Activated CD4-positive, alpha-beta memory T cell treated with anti-CD3 and anti-CD28 coated beads for 36 hours (primary cell): ENCODE measurements at regions of chr6 and their contacts with region 1.

Region 1: DNA sequence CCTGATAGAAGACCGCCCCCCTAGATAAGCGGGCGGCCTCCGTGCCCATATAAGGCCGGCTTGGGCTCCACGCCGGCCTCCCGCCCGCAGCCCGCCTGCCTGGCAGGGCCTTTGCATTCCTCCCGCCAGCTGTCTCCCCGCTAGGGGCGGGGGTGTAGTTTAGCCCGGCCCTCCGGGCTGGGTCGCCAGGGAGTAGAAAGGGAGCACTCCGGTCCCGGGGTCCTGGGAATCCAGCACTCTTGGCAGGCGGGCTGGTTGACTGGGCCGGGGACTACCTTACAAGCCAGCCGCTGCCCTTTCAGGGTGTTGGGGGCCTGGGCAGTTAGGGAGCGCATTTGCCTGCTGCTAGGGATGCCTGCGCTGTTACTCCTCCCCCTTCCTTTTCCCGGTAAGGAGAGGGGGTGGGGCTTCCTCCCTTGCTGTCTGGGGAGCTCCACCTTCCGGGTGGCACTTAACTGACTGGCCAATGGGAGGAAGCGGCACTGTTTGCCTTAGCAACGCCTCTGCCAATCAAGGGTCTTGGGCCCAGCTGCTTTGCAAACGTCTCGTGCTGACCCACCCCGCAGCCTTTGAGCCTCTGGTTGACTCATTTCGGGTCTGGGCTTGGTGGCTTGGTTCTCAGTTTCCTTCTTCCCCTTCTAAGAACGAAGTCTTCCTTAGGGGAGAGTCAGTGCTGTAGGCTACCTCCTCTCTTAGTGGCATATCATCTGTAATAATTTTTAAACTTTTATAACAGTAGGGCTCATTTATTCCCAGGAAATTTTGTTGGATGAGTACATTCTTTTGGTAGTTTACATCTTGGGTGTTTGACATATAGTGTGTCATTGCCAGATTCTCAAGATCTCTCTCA is 3.4 kb downstream of the SRF start:
- DNase-seq: peak; percentile 99
- H3K4me3 Mint-ChIP-seq: peak overlapping the region; percentile 99
- H3K27ac Mint-ChIP-seq: peak overlapping the region; percentile 89
- H3K4me1 Mint-ChIP-seq: peaks cover 43% of the 10 kb centered on the region
- H3K27me3 Mint-ChIP-seq: no peaks in the 10 kb centered on the region

Region 2: DNA sequence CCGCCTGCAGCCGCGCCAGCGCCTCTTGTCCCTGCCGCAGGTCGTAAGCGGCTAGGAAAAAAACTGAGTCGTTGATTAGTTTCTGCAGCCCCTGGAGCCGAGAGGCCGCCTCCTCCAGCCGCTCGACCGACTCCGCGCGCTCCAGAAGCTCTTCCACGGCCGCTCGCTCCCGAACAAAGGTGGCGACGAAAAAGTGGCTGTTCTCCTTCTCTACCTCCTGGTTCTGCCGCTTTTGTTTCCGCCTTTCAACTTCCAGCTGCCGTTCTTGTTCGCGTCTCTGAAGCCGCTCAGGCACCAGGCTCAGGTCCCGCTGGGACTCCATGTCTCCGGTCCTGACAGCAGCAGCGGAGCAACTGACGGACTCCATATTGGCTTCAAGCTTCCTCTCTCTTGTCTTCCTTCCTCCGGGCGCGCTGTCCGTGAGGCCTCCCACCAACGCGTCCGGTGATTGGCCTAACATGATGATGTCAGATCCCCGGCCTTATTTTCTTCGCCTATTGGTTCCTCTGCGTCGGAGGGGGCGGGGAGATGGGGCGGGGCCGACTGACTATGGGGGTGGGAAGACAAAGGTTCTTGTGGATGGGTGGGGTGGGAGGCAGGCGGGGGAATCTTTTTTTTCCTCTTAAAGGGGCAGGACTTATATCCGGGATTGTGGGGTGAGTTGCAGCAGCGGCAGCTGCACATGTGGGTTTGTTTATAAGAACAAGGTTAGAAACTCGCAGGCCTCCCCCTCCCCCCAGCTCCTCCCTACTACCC is 428.6 kb before region 1 on chr6 and contains the start of gene TBCC:
- CTCF ChIA-PET with region 1: no interaction called
- POLR2A ChIA-PET with region 1: no interaction called
- intact Hi-C with region 1: loop called (anchors 10 kb)
- DNase-seq: peak; percentile 97
- H3K4me3 Mint-ChIP-seq: peak within 1 kb of the TSS; percentile 99
- H3K27ac Mint-ChIP-seq: peak within 1 kb of the TSS; percentile 96
- H3K4me1 Mint-ChIP-seq: peaks cover 24% of the 10 kb centered on the region
- H3K27me3 Mint-ChIP-seq: no peaks in the 10 kb centered on the region
- total RNA-seq, gene TBCC: 17.3 TPM

Region 3: DNA sequence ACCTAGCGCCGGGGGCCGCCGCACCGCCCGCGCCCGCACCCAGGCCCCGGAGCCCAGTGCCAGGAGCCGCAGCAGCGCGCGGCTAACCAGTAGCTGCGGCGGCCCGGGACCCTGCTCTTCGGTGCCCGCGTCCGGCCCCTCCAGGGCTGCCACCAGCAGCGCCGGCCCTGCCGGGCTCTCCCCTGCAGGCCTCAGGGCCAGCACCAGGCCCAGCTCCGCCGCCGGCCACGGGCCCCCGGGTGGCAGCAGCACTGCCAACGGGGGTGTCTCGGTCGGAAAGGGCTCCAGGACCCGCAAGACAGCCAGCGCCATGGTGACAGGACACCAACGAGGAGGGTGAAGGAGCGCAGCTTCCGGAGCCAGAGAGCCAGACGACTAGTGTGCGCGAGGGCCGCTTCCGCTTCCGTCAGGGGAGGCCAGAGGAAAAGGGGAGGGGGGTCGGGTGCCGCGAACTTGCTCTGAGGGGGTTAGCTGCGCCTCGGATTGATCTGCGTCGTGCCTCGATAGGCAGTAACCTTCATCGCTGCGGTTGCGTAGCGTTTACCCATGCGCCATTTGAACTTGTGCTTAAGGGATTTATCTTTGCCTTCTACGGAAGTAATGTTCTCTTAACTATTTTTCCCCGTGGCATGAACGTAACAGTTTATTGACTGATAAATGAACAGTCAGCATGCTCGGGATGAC is 195.5 kb before region 1 on chr6 and contains the start of gene PEX6:
- CTCF ChIA-PET with region 1: no interaction called
- POLR2A ChIA-PET with region 1: no interaction called
- intact Hi-C with region 1: loop called (anchors 2 kb)
- DNase-seq: peak; percentile 97
- H3K4me3 Mint-ChIP-seq: peak within 1 kb of the TSS; percentile 94
- H3K27ac Mint-ChIP-seq: peak within 1 kb of the TSS; percentile 98
- H3K4me1 Mint-ChIP-seq: peaks cover 56% of the 10 kb centered on the region
- H3K27me3 Mint-ChIP-seq: no peaks in the 10 kb centered on the region
- total RNA-seq, gene PEX6: 25.6 to 26.4 TPM

Region 4: GRCh38 chr6:43221046-43221972 is 46.8 kb after region 1 on chr6:
- CTCF ChIA-PET with region 1: interaction called, 3 read pairs
- POLR2A ChIA-PET with region 1: interaction called, 11 read pairs
- intact Hi-C with region 1: loop called (anchors 1 kb)
- DNase-seq: no peak
- H3K4me3 Mint-ChIP-seq: no peak overlapping the region
- H3K27ac Mint-ChIP-seq: peak overlapping the region; percentile 55
- H3K4me1 Mint-ChIP-seq: peaks cover 45% of the 10 kb centered on the region
- H3K27me3 Mint-ChIP-seq: no peaks in the 10 kb centered on the region

Region 5: GRCh38 chr6:43369174-43370022 is 194.9 kb after region 1 on chr6 and contains the start of gene ZNF318:
- CTCF ChIA-PET with region 1: interaction called, 3 read pairs
- POLR2A ChIA-PET with region 1: interaction called, 3 read pairs
- intact Hi-C with region 1: loop called (anchors 5 kb)
- DNase-seq: peak; percentile 96
- H3K4me3 Mint-ChIP-seq: peak within 1 kb of the TSS; percentile 85
- H3K27ac Mint-ChIP-seq: peak within 1 kb of the TSS; percentile 91
- H3K4me1 Mint-ChIP-seq: peaks cover 30% of the 10 kb centered on the region
- H3K27me3 Mint-ChIP-seq: no peaks in the 10 kb centered on the region
- total RNA-seq, gene ZNF318: 12.1 to 12.7 TPM

Region 6: GRCh38 chr6:43506667-43507471 is 332.4 kb after region 1 on chr6:
- CTCF ChIA-PET with region 1: interaction called, 3 read pairs
- POLR2A ChIA-PET with region 1: no interaction called
- intact Hi-C with region 1: loop called (anchors 1 kb)
- DNase-seq: peak; percentile 87
- H3K4me3 Mint-ChIP-seq: no peak overlapping the region
- H3K27ac Mint-ChIP-seq: no peak overlapping the region
- H3K4me1 Mint-ChIP-seq: peaks cover 12% of the 10 kb centered on the region
- H3K27me3 Mint-ChIP-seq: peaks cover 17% of the 10 kb centered on the region